ENCODE measurements at regions of chr1 and their contacts with region 1.

Region 1: DNA sequence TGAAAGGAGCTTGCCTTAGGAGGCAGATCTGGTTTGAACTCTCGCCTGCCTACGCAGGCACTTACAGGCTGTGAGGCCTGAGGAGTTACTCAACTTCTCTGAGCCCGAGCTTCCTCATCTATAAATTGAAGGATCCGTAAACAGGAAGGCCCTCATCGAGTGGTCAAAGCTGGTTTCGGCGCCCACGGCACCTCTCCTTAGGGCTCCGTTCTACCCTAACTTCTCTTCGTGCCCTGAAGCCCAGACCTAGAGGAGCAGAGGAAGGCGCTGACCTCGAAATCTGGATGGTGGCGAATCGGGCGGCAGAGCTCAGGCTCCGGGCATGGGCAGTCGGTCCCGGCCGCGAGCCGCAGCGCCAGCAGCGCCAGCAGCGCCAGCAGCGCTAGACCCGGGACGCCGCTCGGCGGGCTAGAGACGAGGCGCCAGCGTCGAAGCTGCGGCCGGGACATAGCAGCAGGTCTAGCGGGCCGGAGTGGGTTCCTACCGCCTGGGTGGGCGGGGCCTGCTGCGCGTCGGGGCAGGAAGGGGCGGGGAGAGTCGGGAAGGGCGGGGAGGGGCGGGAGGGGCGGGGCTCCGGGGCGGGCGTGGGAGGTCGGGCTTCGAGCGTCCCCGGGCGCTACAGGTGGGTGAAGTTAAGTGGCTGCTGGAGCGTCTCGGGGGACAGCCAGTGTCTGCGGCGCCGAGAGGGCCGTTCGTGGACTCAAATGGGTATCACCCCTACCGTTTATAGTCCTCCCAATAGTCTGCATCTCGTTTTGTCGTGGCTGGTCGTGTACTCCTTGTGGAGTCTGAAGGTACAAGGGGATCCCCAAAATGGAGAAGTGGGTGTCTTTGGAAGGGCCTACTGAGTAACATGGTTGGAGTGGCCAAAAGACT is at the start of gene CTBS:
- DNase-seq: peak; percentile 95
- H3K4me3 Mint-ChIP-seq: peak within 1 kb of the TSS; percentile 99
- H3K27ac Mint-ChIP-seq: peak within 1 kb of the TSS; percentile 100
- H3K4me1 Mint-ChIP-seq: peaks cover 41% of the 10 kb centered on the region
- H3K27me3 Mint-ChIP-seq: no peaks in the 10 kb centered on the region
- total RNA-seq, gene CTBS: 13.1 and 13.9 TPM in 2 replicates

Region 2: DNA sequence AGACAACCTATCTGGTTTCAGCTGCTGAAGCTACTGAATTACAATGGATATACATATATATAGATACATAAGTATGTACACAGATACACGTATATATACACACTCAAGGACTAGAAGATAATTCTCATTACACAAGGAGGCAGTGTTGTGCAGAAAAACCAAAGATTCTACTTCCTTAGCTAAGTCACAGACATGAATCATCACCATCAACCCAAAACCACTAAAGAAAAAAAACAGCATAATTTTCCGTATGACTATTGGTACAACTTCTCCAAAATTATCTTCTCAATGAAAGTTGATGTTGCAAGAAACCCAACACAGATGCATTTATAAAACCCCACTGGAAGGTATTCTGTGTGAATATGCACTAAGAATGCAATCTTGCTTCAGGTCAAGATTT is 131.9 kb before region 1 on chr1:
- intact Hi-C with region 1: loop called (anchors 2 kb)
- DNase-seq: peak; percentile 80
- H3K4me3 Mint-ChIP-seq: peak overlapping the region; percentile 28
- H3K27ac Mint-ChIP-seq: peak overlapping the region; percentile 69
- H3K4me1 Mint-ChIP-seq: peaks cover 16% of the 10 kb centered on the region
- H3K27me3 Mint-ChIP-seq: peaks cover 15% of the 10 kb centered on the region

Region 3: GRCh38 chr1:84506002-84506728 is 68.0 kb before region 1 on chr1 and contains the starts of genes GNG5 and SPATA1:
- intact Hi-C with region 1: loop called (anchors 1 kb)
- DNase-seq: peak; percentile 99
- H3K4me3 Mint-ChIP-seq: peak within 1 kb of the TSS; percentile 99
- H3K27ac Mint-ChIP-seq: peak within 1 kb of the TSS; percentile 99
- H3K4me1 Mint-ChIP-seq: peaks cover 41% of the 10 kb centered on the region
- H3K27me3 Mint-ChIP-seq: no peaks in the 10 kb centered on the region
- total RNA-seq, gene GNG5: 115 and 122 TPM in 2 replicates
- total RNA-seq, gene SPATA1: 0.69 and 0.98 TPM in 2 replicates

Region 4: GRCh38 chr1:84690397-84691121 is 116.4 kb after region 1 on chr1 and contains the start of gene SSX2IP:
- intact Hi-C with region 1: loop called (anchors 1 kb)
- DNase-seq: peak; percentile 100
- H3K4me3 Mint-ChIP-seq: peak within 1 kb of the TSS; percentile 98
- H3K27ac Mint-ChIP-seq: peak within 1 kb of the TSS; percentile 95
- H3K4me1 Mint-ChIP-seq: peaks cover 43% of the 10 kb centered on the region
- H3K27me3 Mint-ChIP-seq: peaks cover 4% of the 10 kb centered on the region
- total RNA-seq, gene SSX2IP: 10.0 and 11.8 TPM in 2 replicates

Region 5: DNA sequence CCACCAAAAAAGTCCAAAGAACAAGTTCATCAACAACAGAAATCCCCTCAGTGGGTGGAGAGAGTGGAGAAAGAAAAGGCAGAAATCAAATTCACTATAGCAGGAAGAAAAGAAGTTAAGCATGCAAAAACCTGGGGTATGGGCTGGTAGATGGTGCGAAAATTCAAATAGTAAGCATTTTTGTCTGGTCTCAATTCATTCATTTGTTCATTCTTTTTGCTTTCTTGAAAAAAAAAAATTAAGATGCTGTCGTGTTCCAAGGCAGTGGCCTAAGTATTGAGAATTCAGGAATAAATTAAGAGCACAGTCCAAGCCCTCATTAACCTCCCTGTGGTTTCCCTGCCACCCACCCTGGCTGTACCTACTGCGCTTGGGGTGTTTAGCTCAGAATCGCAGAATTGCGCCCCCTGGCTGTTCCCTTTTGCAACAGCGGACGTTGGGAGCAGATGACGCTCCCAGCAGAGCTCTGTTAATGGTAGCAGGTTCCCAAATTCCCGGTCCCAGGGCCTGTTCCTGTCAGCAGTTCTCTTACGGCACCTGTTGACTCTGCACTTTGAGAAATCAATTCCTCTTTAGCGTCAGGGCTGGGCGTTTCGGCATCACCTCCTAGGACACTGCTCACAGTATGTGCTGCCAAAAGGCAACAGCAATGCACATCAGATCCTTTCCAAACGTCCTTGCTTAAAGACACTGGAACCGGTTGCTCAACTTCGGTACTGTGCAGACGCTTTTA is 150.1 kb after region 1 on chr1:
- intact Hi-C with region 1: no loop called
- DNase-seq: peak; percentile 80
- H3K4me3 Mint-ChIP-seq: no peak overlapping the region
- H3K27ac Mint-ChIP-seq: no peak overlapping the region
- H3K4me1 Mint-ChIP-seq: peaks cover 2% of the 10 kb centered on the region
- H3K27me3 Mint-ChIP-seq: peaks cover 22% of the 10 kb centered on the region

Region 6: GRCh38 chr1:85276215-85276977 is 702.2 kb after region 1 on chr1 and contains the start of gene BCL10:
- intact Hi-C with region 1: loop called (anchors 5 kb)
- DNase-seq: peak; percentile 100
- H3K4me3 Mint-ChIP-seq: peak within 1 kb of the TSS; percentile 84
- H3K27ac Mint-ChIP-seq: peak within 1 kb of the TSS; percentile 91
- H3K4me1 Mint-ChIP-seq: peaks cover 46% of the 10 kb centered on the region
- H3K27me3 Mint-ChIP-seq: peaks cover 20% of the 10 kb centered on the region
- total RNA-seq, gene BCL10: 25.5 and 27.8 TPM in 2 replicates

Measured in activated CD4-positive, alpha-beta T cell treated with anti-CD3 and anti-CD28 coated beads, Interleukin-2, amount 10 ng/mL, durations not matched to agents 24 days and 14 days (primary cell).